ENCODE measurements at regions of chr9 and their contacts with region 1.

Region 1: GRCh38 chr9:135347096-135347860 is 132.3 kb upstream of the PPP1R26 start:
- DNase-seq: no peak
- H3K4me3 ChIP-seq: no peak overlapping the region
- H3K27ac ChIP-seq: no peak overlapping the region
- H3K4me1 ChIP-seq: peaks cover 0 to 6% (median 3%) of the 10 kb centered on the region in 4 donors
- H3K27me3 ChIP-seq: peaks cover 0 to 100% (median 18%) of the 10 kb centered on the region in 3 donors
- CTCF ChIP-seq: no peak
- EP300 ChIP-seq: no peak
- POLR2A ChIP-seq: no peak

Region 2: DNA sequence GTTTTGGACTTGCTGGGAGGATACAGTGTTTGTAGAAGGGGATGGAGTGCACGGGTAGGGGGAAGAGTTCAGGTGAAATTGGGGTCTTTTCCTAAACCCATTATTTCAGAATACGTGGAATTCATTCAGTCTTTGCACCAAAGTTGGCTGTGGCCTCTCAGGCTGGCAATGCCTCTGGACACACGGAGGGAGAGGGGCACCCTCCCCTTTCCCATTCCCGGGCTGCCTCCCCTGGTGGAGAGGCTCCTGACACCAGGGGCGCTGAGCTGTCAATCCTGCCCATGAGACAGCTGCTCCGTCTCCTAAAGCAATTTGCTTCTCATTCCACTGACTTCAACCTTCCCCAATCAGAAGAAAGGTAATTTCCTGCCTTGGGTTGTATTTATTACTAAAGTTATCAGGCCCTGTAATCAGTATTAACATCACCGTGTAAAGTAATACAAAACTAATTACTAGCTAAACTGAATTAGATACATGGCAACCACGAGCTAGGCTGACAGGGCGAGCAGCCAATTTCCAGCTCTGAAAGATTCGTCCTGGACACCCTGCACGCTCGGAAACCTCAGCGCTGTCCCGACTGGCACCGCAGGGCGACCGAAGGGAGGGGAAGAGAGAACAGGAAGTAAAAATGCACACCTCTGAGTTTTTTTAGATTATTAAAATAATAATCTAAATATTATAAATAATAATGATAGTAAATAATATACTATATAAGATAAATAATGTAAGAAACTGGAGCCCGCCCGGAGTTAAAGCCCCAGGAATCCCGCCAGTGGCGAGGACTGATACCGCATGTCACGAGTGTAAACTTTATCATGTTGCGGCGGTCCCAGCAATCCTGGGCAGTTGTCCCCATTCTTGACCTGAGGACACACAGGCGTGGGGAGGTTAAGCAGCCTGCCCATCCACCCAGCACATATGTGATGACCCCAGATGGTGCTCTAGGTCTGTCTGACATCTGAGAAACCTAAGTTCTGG is 266.7 kb before region 1 on chr9:
- intact Hi-C with region 1: loop called (anchors 5 kb)
- DNase-seq: no peak
- H3K4me3 ChIP-seq: no peak overlapping the region
- H3K27ac ChIP-seq: no peak overlapping the region
- H3K4me1 ChIP-seq: peaks cover 4 to 27% (median 18%) of the 10 kb centered on the region in 4 donors
- H3K27me3 ChIP-seq: peaks cover 0 to 61% (median 14%) of the 10 kb centered on the region in 3 donors
- CTCF ChIP-seq: no peak
- EP300 ChIP-seq: no peak
- POLR2A ChIP-seq: no peak